ENCODE measurements at regions of chr16 and their contacts with region 1.

Region 1: DNA sequence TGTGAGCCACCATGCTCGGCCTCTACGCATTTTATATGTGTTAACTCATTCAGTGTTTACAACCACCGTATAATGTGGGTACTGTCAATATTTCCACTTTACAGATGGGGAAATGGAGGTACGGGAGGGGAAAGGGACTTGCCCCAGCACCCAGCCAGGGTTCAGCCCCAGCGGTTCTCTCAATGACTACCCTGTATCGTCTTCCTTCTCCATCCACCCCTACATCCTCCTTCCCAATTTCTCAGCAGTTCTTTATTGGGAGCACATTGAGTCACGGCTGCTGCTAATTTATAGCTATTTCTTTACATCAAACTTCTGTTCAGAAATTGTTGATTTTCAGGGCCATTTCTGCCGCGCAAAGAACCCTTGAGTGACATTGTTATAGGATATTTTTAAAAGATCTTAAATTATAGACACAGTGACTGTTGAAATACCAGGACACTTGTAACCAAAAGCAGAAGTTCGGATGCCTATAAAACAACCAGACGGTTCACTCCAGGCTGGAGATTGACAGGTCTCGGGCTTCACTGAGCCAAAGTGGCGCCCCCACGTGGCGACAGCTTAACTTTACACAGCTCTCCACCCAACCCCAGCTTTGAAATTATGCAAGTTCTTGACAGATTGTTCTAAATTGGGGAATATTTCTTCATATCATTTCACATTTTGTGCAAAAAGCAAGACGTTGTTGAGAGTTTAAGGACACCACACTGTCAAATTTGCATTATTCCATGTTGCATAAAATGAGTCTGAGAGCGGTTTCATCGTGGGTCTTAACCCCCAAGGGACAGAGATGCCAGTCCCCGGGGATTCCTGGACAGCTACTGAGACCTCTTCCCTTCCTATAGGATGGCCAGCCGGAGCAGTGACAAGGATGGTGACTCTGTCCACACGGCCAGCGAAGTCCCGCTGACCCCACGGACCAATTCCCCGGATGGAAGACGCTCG is 11.8 kb downstream of the SYT17 start:
- DNase-seq: peak; percentile 11
- H3K4me3 ChIP-seq: no peak overlapping the region
- H3K27ac ChIP-seq: no peak overlapping the region
- H3K4me1 ChIP-seq: no peaks in the 10 kb centered on the region
- H3K27me3 ChIP-seq: no peaks in the 10 kb centered on the region
- CTCF ChIP-seq: peak; percentile 73 to 78

Region 2: DNA sequence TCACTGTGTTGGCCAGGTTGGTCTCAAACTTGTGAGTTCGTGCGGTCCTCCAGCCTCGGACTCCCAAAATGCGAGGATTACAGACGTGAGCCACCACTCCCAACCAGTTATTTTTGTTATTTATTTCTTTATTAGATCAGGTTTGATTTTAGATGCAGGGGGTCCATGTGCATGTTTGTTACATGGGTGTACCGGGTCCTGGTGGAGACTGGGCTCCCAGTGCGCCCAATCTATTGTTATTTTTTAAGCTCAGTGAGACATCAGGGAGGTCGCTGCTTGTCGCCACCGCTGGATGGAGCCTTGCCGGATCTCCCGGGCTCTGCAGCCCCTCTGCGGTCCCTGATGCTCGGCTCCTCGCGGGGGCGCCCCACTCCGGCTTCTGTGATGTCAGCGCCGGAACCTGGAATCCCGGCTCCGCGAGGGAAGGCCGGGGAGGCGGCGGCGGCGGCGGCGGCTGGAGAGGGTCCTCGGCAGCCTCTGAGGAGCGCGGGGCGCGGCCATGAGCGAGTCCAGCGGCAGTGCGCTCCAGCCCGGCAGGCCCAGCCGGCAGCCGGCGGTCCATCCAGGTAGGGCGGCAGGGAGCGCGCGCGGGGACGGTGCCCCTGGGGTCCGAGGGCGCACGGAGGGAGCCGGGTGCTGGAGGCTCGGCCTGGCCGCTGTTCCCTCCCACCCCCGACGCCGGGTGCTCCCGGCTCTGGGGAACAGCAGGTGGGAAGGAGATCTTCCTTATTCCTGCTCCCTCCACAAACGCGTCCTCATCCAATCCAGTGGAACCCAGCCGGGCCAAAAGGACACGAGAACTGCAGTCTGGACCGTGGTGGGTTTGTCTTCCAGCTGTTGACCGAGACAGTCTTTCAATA is 196.0 kb before region 1 on chr16 and contains the start of gene TMC7:
- CTCF ChIA-PET with region 1: no interaction called
- dilution Hi-C with region 1: loop called (anchors 10 kb)
- in situ Hi-C with region 1: no loop called
- intact Hi-C with region 1: no loop called
- DNase-seq: peak; percentile 83
- H3K4me3 ChIP-seq: peak within 1 kb of the TSS; percentile 56 to 82 (median 76)
- H3K27ac ChIP-seq: peak within 1 kb of the TSS; percentile 75
- H3K4me1 ChIP-seq: peaks cover 6% of the 10 kb centered on the region
- H3K27me3 ChIP-seq: no peaks in the 10 kb centered on the region
- CTCF ChIP-seq: peak; percentile 57 to 96
- total RNA-seq, gene TMC7: 13.7 to 17.5 TPM

Region 3: GRCh38 chr16:19086322-19087199 is 93.3 kb before region 1 on chr16:
- CTCF ChIA-PET with region 1: interaction called, 3 read pairs
- dilution Hi-C with region 1: no loop called
- in situ Hi-C with region 1: loop called in 1 of 2 experiments (anchors 10 kb)
- intact Hi-C with region 1: loop called (anchors 5 kb)
- DNase-seq: peak; percentile 74
- H3K4me3 ChIP-seq: peak overlapping the region; percentile 28 to 48 (median 34)
- H3K27ac ChIP-seq: no peak overlapping the region
- H3K4me1 ChIP-seq: peaks cover 12% of the 10 kb centered on the region
- H3K27me3 ChIP-seq: no peaks in the 10 kb centered on the region
- CTCF ChIP-seq: peak; percentile 73 to 99

Region 4: DNA sequence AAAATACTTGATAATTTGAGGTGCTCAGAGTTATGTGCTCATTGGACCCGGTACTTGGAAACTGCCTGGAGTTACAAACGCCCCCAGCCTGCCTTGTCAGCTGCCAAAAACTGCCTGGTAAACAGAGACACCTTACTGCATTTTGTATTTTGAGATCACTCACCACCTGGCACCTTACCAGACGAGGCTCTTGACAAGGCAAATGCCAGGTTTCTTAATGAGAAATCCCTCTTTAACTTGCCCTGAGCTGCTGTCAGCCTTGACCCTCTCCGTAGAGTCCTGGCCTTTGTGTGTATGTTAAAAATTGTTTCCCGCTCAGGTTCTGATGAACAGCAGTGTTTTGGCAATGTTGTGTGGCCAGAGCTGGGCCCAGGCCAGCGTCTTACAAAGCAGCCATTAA is 17.1 kb after region 1 on chr16:
- CTCF ChIA-PET with region 1: interaction called, 10 read pairs
- dilution Hi-C with region 1: no loop called
- in situ Hi-C with region 1: no loop called
- intact Hi-C with region 1: no loop called
- DNase-seq: no peak
- H3K4me3 ChIP-seq: no peak overlapping the region
- H3K27ac ChIP-seq: no peak overlapping the region
- H3K4me1 ChIP-seq: no peaks in the 10 kb centered on the region
- H3K27me3 ChIP-seq: no peaks in the 10 kb centered on the region
- CTCF ChIP-seq: no peak

Region 5: GRCh38 chr16:19223235-19224170 is 43.7 kb after region 1 on chr16:
- CTCF ChIA-PET with region 1: no interaction called
- dilution Hi-C with region 1: loop called (anchors 5 kb)
- in situ Hi-C with region 1: no loop called
- intact Hi-C with region 1: no loop called
- DNase-seq: peak; percentile 16
- H3K4me3 ChIP-seq: no peak overlapping the region
- H3K27ac ChIP-seq: no peak overlapping the region
- H3K4me1 ChIP-seq: no peaks in the 10 kb centered on the region
- H3K27me3 ChIP-seq: no peaks in the 10 kb centered on the region
- CTCF ChIP-seq: peak; percentile 59 to 73